GM12878 (cell line): ENCODE measurements at regions of chr1 and their contacts with region 1.

Region 1: DNA sequence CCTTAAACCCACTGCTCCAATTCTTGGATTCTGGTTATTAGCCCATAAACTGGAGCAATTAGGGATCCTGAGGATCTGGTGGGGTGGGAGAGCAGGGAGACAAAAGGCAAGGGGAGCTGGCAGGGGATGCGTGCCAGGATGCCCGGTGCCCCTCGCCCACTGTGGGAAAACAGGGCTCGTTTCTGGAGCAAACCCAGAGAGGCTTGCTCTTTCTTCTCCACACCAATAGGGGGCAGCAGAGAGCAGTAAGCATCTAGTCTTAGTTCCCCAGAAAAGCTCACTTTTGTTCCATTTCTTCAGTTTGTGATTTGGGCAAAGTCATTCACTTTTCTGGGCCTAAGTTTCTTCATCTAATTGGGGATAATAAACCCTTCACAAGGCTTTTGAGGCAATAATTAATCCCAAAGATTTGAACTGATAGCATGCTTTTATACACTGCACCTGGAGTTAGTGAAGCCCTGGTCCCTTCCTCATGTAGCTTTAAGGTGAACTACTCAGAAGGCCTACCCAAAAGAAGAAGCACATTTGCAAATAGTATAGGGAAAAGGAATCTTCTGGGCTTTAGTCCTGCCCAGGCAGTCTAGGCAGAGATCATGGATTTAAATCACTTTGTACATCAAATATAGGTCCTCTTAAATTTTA is 160.6 kb upstream of the USP24 start:
- DNase-seq: no peak
- ATAC-seq: peak; percentile 80
- H3K4me3 ChIP-seq: no peak overlapping the region
- H3K27ac ChIP-seq: no peak overlapping the region
- H3K4me1 ChIP-seq: no peaks in the 10 kb centered on the region
- H3K27me3 ChIP-seq: no peaks in the 10 kb centered on the region; a peak in 2 of 4 replicates
- CTCF ChIP-seq: peak; percentile 71 to 90 (median 89)
- EP300 ChIP-seq: no peak
- POLR2A ChIP-seq: no peak
- RAD21 ChIP-seq: peak; percentile 63

Region 2: DNA sequence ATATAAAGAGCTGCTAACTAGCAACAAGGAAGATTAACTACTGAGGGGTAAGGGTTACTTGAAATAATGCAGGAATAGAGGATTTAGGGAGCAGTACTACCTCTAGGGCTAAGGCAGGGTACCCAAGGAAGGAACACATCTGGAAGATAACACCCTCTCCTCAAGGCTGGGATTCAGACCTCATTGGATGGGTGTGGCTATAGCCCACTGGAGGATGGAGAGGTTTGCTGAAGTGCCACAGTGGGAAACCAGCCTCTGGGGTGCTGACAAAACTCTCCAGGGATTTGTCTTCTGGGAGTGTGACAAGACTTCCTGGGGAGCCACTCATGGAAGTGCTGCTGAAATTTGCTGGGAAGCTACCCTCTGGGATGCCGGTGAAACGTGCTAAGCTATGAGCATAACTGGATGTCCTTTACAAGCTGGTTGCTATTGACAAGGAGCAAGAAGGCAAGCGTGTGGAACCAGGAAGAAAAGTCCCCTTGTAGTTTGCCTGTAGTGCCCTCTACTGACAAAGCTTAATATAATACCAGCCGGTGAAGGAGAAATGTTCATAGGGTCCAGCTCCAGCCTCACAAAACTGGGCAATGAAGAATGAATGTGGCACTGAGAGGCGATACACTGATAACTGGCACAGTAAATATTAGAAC is 37.8 kb before region 1 on chr1:
- CTCF ChIA-PET with region 1: interaction called, 11 read pairs
- POLR2A ChIA-PET with region 1: no interaction called
- RAD21 ChIA-PET with region 1: interaction called, 7 read pairs
- SMC1A ChIA-PET with region 1: interaction called, 4 read pairs
- in situ Hi-C with region 1: no loop called
- intact Hi-C with region 1: no loop called
- DNase-seq: peak; percentile 13
- ATAC-seq: peak; percentile 95
- H3K4me3 ChIP-seq: no peak overlapping the region
- H3K27ac ChIP-seq: no peak overlapping the region
- H3K4me1 ChIP-seq: no peaks in the 10 kb centered on the region
- H3K27me3 ChIP-seq: peaks cover 0 to 1% of the 10 kb centered on the region in 2 experiments; a peak in 1 of 4 replicates
- CTCF ChIP-seq: peak; percentile 57 to 62 (median 57)
- EP300 ChIP-seq: no peak
- POLR2A ChIP-seq: no peak
- RAD21 ChIP-seq: peak; percentile 69

Region 3: GRCh38 chr1:55362558-55362957 is 13.2 kb before region 1 on chr1:
- CTCF ChIA-PET with region 1: interaction called, 63 read pairs
- POLR2A ChIA-PET with region 1: no interaction called
- RAD21 ChIA-PET with region 1: no interaction called
- SMC1A ChIA-PET with region 1: interaction called, 5 read pairs
- in situ Hi-C with region 1: no loop called
- intact Hi-C with region 1: no loop called
- DNase-seq: no peak
- ATAC-seq: no peak
- H3K4me3 ChIP-seq: no peak overlapping the region
- H3K27ac ChIP-seq: no peak overlapping the region
- H3K4me1 ChIP-seq: no peaks in the 10 kb centered on the region
- H3K27me3 ChIP-seq: no peaks in the 10 kb centered on the region; a peak in 1 of 4 replicates
- CTCF ChIP-seq: no peak
- EP300 ChIP-seq: no peak
- POLR2A ChIP-seq: no peak
- RAD21 ChIP-seq: no peak

Region 4: GRCh38 chr1:55632058-55632457 is 256.3 kb after region 1 on chr1:
- CTCF ChIA-PET with region 1: no interaction called
- POLR2A ChIA-PET with region 1: no interaction called
- RAD21 ChIA-PET with region 1: no interaction called
- SMC1A ChIA-PET with region 1: no interaction called
- in situ Hi-C with region 1: no loop called
- intact Hi-C with region 1: no loop called
- DNase-seq: no peak
- ATAC-seq: no peak
- H3K4me3 ChIP-seq: no peak overlapping the region
- H3K27ac ChIP-seq: no peak overlapping the region
- H3K4me1 ChIP-seq: no peaks in the 10 kb centered on the region
- H3K27me3 ChIP-seq: no peaks in the 10 kb centered on the region
- CTCF ChIP-seq: no peak
- EP300 ChIP-seq: no peak
- POLR2A ChIP-seq: no peak
- RAD21 ChIP-seq: no peak

Region 5: DNA sequence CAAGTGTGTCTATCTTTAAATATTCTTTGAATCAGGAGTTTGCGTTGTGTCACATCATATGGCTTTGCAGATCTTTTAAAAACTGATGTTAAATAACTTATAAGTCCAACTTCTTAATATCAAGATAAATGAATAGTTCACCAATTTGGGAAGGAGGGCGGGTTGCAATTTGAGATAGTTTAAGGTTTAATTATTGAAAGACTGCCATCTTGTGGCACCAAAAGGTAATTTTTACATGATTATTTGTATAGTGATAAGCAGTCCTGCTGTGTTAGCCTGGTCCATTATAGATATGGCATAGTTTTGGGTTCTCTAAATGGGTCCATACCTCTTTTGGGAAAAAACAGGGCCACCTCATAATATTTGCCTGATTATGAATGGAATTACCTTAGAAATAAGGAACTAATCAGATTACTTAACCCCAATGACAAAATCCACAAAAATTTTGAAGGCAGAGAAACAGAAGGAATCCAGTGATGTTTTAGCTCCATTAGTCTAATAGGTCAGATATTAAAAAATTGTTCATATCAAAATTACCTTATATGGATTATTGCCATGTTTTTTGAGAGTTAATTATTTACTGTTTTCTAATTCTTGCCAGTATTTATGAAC is 1333.6 kb after region 1 on chr1:
- CTCF ChIA-PET with region 1: interaction called, 21 read pairs
- POLR2A ChIA-PET with region 1: no interaction called
- RAD21 ChIA-PET with region 1: interaction called, 10 read pairs
- SMC1A ChIA-PET with region 1: interaction called, 7 read pairs
- in situ Hi-C with region 1: no loop called
- intact Hi-C with region 1: loop called (anchors 2 kb)
- DNase-seq: no peak
- ATAC-seq: peak; percentile 85
- H3K4me3 ChIP-seq: no peak overlapping the region
- H3K27ac ChIP-seq: no peak overlapping the region
- H3K4me1 ChIP-seq: no peaks in the 10 kb centered on the region
- H3K27me3 ChIP-seq: no peaks in the 10 kb centered on the region
- CTCF ChIP-seq: peak; percentile 33 to 57 (median 44); a peak in 4 of 6 replicates
- EP300 ChIP-seq: no peak
- POLR2A ChIP-seq: no peak
- RAD21 ChIP-seq: peak; percentile 45

Region 6: DNA sequence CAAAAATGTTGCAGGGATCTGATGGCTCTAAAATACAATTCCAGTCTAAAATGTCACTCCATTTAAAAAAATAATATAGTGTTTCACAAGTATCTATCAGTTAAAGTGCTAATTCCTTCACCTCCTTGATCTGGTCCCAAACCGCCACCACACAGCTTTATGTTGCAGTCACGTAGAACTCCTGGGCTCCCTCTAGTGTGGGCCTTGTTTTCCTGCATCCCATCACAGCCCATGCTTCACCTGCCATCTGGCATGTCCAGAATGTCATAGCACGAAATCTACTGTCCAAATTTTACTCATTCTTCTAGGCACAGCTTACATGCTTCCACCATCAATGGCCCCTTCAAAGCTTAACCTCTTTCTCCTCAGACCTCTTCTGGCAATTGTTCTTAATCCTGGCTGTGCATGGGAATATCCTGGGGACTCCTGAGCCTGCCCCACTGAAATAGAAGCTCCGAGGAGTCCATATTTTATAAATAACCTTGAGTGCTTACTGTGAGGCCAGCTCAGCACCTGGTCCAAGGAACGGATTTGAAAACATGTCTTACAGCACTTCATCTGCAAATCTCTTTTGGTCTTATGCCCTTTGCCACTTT is 1427.9 kb after region 1 on chr1:
- CTCF ChIA-PET with region 1: no interaction called
- POLR2A ChIA-PET with region 1: no interaction called
- RAD21 ChIA-PET with region 1: no interaction called
- SMC1A ChIA-PET with region 1: no interaction called
- in situ Hi-C with region 1: no loop called
- intact Hi-C with region 1: loop called (anchors 10 kb)
- DNase-seq: no peak
- ATAC-seq: peak; percentile 94
- H3K4me3 ChIP-seq: no peak overlapping the region
- H3K27ac ChIP-seq: no peak overlapping the region
- H3K4me1 ChIP-seq: no peaks in the 10 kb centered on the region
- H3K27me3 ChIP-seq: no peaks in the 10 kb centered on the region
- CTCF ChIP-seq: peak; percentile 63 to 74 (median 73)
- EP300 ChIP-seq: no peak
- POLR2A ChIP-seq: no peak
- RAD21 ChIP-seq: peak; percentile 30